ENCODE measurements at regions of chrX and their contacts with region 1.

Region 1: GRCh38 chrX:154515878-154516655 is at the start of gene FAM3A:
- DNase-seq: peak; percentile 87
- ATAC-seq: peak; percentile 97
- H3K4me3 Mint-ChIP-seq: peak within 1 kb of the TSS; percentile 85
- H3K27ac Mint-ChIP-seq: peak within 1 kb of the TSS; percentile 85
- H3K4me1 Mint-ChIP-seq: peaks cover 18% of the 10 kb centered on the region
- H3K27me3 Mint-ChIP-seq: no peaks in the 10 kb centered on the region
- CTCF ChIP-seq: no peak
- total RNA-seq, gene FAM3A: 30.0 and 36.1 TPM in 2 replicates

Region 2: DNA sequence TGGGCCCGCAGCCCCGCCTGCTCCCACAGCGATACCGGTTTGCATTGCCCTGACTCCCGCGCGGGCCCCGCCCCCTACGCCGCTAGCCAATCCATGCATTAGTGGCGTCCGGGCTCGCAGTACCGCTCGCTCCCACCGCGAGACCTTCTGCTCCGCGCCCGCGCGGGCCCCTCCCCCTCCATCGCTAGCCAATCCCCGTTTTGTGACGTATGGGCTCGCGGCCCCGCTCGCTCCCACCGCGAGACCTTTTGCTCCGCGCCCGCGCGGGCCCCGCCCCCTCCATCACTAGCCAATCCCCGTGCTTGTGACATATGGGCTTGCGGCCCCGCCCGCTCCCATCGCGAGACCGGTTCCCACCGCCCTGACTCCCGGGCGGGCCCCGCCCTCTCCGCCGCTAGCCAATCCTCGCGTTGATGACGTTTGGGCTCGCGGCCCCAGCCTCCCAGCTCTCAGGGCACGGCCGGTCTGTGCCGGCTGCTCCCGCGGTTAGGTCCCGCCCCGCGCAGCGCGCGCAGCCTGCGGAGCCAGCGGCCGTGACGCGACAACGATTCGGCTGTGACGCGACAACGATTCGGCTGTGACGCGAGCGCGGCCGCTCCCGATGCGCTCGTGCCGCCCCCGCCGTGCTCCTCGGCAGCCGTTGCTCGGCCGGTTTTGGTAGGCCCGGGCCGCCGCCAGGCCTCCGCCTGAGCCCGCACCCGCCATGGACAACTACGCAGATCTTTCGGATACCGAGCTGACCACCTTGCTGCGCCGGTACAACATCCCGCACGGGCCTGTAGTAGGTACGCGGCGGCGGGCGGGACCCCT is 137.1 kb before region 1 on chrX and contains the start of gene EMD:
- CTCF ChIA-PET with region 1: no interaction called
- POLR2A ChIA-PET with region 1: no interaction called
- intact Hi-C with region 1: loop called (anchors 10 kb)
- DNase-seq: peak; percentile 87
- ATAC-seq: peak; percentile 83
- H3K4me3 Mint-ChIP-seq: peak within 1 kb of the TSS; percentile 83
- H3K27ac Mint-ChIP-seq: peak within 1 kb of the TSS; percentile 83
- H3K4me1 Mint-ChIP-seq: peaks cover 18% of the 10 kb centered on the region
- H3K27me3 Mint-ChIP-seq: no peaks in the 10 kb centered on the region
- CTCF ChIP-seq: no peak
- total RNA-seq, gene EMD: 68.4 and 70.2 TPM in 2 replicates

Region 3: DNA sequence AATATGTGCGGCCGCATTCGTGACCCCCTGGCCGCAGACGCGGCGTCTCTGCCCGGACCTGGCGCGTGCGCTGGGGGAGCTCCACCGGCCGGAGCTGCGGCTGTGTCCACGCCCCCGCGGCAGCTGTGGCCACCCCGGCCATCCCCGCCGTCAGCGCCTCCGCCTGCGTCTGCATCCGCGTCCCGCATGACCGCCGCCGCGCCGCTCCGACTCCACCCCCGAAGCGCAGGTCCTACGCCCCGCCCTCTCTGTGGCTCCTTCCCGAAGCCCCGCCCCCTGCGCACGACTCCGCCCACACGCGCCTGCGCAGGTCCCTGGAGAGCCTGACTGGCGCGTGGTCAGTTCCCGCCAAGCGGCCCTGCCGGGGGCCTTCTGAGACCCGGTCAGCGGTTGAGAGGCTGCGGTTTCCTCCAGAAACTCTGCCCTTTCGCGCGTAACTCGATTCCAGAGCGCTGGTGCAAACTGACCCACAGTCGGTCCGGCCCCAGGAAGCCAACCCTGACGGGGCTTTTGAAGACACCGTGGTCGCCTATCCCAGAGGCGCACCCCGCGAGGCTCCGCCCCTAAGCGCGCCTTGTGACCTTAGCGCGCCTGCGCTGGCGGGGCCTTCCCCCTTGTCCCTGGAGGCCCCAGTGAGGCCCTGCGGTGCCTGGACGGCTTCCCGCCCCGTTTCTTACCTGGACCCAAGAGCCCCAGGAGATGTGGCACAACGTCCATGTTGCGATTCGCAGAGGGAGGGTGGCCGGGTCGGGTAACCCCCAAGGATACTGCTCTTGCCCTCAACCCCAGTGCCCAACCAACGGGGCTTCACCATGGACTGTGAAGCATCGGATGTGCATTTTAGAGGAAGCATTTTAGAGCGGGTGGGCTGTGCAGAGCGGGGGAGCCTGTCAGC is 37.1 kb before region 1 on chrX and contains the start of gene LAGE3:
- CTCF ChIA-PET with region 1: no interaction called
- POLR2A ChIA-PET with region 1: interaction called, 6 read pairs
- intact Hi-C with region 1: loop called (anchors 2 kb)
- DNase-seq: peak; percentile 95
- ATAC-seq: peak; percentile 90
- H3K4me3 Mint-ChIP-seq: peak within 1 kb of the TSS; percentile 80
- H3K27ac Mint-ChIP-seq: peak within 1 kb of the TSS; percentile 88
- H3K4me1 Mint-ChIP-seq: peaks cover 23% of the 10 kb centered on the region
- H3K27me3 Mint-ChIP-seq: no peaks in the 10 kb centered on the region
- CTCF ChIP-seq: no peak
- total RNA-seq, gene LAGE3: 16.6 and 18.9 TPM in 2 replicates

Region 4: GRCh38 chrX:154526901-154527675 is 11.0 kb after region 1 on chrX:
- CTCF ChIA-PET with region 1: no interaction called
- POLR2A ChIA-PET with region 1: interaction called, 19 read pairs
- intact Hi-C with region 1: no loop called
- DNase-seq: peak; percentile 44
- ATAC-seq: peak; percentile 90
- H3K4me3 Mint-ChIP-seq: peak overlapping the region; percentile 68
- H3K27ac Mint-ChIP-seq: peak overlapping the region; percentile 76
- H3K4me1 Mint-ChIP-seq: peaks cover 14% of the 10 kb centered on the region
- H3K27me3 Mint-ChIP-seq: no peaks in the 10 kb centered on the region
- CTCF ChIP-seq: no peak

Measured in activated B cell treated with CpG ODN at 0.5 μM for 24 hours (primary cell).